ENCODE measurements at regions of chr10 and their contacts with region 1.

Region 1: DNA sequence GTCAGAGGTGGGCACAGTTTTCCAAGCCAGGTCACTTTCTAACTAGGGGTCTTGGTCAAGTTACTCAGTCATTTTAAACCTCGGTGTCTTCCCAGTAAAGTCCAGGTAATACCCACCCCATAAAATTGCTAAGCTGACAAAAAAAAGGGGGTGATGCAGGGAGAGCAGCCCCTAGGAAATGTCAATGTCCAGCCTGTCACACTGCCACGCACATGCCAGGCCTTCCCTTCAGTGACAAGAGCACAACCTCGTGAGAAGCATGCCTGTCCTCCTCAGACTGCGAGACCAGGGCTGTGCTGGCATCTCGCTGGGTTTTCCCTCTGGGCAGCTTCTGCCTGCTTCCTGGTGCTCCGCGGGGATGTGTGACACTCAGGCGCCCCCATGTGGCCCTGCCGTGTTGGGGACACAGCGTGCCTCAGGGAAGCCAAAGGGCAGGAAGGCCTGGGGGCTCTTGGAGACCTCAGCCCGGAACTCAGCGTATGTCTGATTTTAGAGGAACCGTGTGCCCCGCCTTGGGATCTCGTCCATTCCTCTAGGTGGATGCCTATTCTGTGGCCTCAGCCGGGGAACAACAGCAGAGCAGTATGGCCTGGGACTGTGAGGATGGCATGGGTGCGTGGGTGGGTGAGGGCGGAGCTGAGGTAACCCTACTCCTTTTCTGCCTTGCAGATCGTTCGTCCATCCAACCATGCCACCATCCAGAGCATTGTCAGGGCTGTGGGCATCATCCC is 10.2 kb upstream of the GDF2 start:
- DNase-seq: peak; percentile 75 to 92 (median 81)
- ATAC-seq: peak; percentile 77
- H3K4me3 ChIP-seq: peak overlapping the region; percentile 0
- H3K4me3 Mint-ChIP-seq: peak overlapping the region; percentile 56
- H3K27ac ChIP-seq: peak overlapping the region in 1 of 2 donors; percentile 39
- H3K27ac Mint-ChIP-seq: peak overlapping the region; percentile 88
- H3K4me1 ChIP-seq: peaks cover 44% of the 10 kb centered on the region
- H3K4me1 Mint-ChIP-seq: peaks cover 33% of the 10 kb centered on the region
- H3K27me3 ChIP-seq: no peaks in the 10 kb centered on the region
- H3K27me3 Mint-ChIP-seq: no peaks in the 10 kb centered on the region
- CTCF ChIP-seq: peak; percentile 90

Region 2: GRCh38 chr10:47031901-47032465 is 280.1 kb before region 1 on chr10:
- CTCF ChIA-PET with region 1: no interaction called
- POLR2A ChIA-PET with region 1: no interaction called
- intact Hi-C with region 1: no loop called
- DNase-seq: peak in 1 of 14 experiments; percentile 26
- ATAC-seq: no peak
- H3K4me3 ChIP-seq: no peak overlapping the region
- H3K4me3 Mint-ChIP-seq: no peak overlapping the region
- H3K27ac ChIP-seq: no peak overlapping the region
- H3K27ac Mint-ChIP-seq: no peak overlapping the region
- H3K4me1 ChIP-seq: no peaks in the 10 kb centered on the region
- H3K4me1 Mint-ChIP-seq: no peaks in the 10 kb centered on the region
- H3K27me3 ChIP-seq: no peaks in the 10 kb centered on the region
- H3K27me3 Mint-ChIP-seq: no peaks in the 10 kb centered on the region
- CTCF ChIP-seq: no peak

Region 3: DNA sequence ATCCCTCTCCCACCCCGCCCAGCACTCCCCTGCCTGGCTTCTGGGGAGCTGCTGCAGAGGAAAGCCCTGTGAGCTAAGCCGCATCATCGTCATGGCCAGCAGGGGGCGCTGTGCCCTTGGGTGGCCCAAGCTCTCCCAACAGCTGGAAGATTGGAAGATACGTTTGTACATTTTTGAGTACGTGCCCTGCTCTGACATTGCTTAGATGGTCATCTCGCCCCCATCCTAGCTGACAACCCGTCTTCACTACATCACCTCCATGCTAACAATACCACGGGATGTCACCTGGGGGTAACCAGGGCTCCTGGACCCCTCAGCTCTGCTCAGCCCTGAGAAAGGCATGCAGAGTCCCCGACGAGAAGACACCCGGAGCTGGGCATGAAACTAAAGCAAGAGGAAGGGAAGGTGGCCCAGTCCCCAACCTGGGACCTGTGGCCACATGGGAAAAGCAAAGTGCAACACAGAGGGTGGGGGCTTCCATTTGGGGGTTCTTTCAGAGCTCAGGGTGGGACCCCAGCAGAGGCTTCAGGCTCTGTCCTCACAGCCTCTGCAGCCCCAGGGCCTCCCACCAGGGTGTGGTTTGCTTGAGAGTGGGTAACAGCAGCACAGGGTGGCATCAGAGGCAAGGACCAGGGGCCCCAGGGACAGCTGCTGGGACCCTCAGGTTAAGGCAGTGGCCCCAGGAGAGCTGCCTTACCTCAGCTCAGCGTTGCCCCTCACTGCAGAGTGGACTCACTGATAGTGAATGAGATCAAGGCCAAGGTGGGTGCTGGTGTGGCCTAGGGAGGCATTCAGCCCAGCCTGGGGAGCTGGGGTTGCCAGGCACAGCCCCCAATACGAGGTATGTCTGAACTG is 264.2 kb before region 1 on chr10:
- CTCF ChIA-PET with region 1: interaction called, 76 read pairs
- POLR2A ChIA-PET with region 1: interaction called, 42 read pairs
- intact Hi-C with region 1: loop called (anchors 1 kb)
- DNase-seq: peak; percentile 60 to 87 (median 74)
- ATAC-seq: peak; percentile 60
- H3K4me3 ChIP-seq: no peak overlapping the region
- H3K4me3 Mint-ChIP-seq: no peak overlapping the region
- H3K27ac ChIP-seq: no peak overlapping the region
- H3K27ac Mint-ChIP-seq: no peak overlapping the region
- H3K4me1 ChIP-seq: peaks cover 17% of the 10 kb centered on the region
- H3K4me1 Mint-ChIP-seq: peaks cover 23% of the 10 kb centered on the region
- H3K27me3 ChIP-seq: no peaks in the 10 kb centered on the region
- H3K27me3 Mint-ChIP-seq: no peaks in the 10 kb centered on the region
- CTCF ChIP-seq: peak; percentile 86

Region 4: DNA sequence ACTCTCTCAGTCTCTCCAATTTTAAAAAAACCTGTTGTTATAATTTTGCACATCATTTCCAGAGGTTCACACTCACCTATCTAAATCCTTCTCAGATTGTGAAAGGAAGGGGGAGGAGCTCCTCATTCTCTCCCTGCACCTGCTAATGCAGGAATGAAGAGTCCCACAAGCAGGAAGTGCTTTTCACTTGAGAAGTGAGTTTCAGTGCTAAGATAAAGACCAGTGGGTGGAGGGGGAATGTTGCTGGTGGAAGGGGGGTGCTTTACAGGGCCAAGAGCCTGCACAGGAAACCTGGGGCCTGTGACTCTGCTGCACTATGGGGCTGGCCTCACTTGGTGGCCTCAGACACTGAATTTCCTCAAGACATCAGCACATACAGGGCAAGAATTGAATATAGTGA is 224.4 kb before region 1 on chr10:
- CTCF ChIA-PET with region 1: no interaction called
- POLR2A ChIA-PET with region 1: no interaction called
- intact Hi-C with region 1: no loop called
- DNase-seq: peak in 1 of 14 experiments; percentile 25
- ATAC-seq: peak; percentile 32
- H3K4me3 ChIP-seq: no peak overlapping the region
- H3K4me3 Mint-ChIP-seq: no peak overlapping the region
- H3K27ac ChIP-seq: peak overlapping the region in 1 of 2 donors; percentile 14
- H3K27ac Mint-ChIP-seq: peak overlapping the region; percentile 62
- H3K4me1 ChIP-seq: peaks cover 12% of the 10 kb centered on the region
- H3K4me1 Mint-ChIP-seq: peaks cover 19% of the 10 kb centered on the region
- H3K27me3 ChIP-seq: no peaks in the 10 kb centered on the region
- H3K27me3 Mint-ChIP-seq: no peaks in the 10 kb centered on the region
- CTCF ChIP-seq: no peak

Region 5: DNA sequence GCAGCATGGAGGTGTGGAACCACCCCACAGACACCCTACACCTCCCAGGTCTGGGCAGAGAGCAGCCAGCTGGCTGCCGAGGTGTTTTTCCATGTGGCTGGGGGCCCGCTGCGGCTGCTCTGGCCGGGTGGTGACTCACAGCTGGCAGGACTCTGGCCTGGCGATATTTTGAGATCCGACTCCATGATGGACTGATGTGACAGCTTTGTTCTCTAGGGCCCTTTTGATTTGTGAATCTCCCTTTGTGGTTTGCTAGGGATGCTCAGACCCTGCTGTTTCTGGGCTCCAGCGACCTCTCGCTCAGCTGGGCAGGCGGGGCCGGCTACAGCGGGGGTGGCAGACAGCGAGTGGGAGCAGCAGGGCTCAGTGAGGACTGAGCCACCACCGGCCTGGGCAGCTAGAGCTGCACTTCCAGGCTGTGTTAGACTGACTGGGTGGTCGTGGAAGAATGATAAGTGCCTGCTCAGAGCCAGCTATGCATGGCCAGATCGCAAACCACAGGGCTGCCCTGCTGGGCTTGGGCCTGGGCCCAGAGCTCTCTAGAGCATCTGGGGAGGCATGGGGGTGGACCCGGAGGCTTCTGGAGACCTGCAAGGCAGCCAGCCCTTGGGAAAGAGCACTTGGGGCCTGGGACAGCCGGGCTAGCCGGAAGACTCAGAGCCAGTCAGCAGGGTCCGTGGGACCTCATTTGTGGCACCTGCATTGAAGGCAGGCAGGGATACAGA is 58.3 kb before region 1 on chr10:
- CTCF ChIA-PET with region 1: interaction called, 3 read pairs
- POLR2A ChIA-PET with region 1: interaction called, 4 read pairs
- intact Hi-C with region 1: loop called (anchors 1 to 5 kb)
- DNase-seq: peak in 1 of 14 experiments; percentile 22
- ATAC-seq: no peak
- H3K4me3 ChIP-seq: no peak overlapping the region
- H3K4me3 Mint-ChIP-seq: no peak overlapping the region
- H3K27ac ChIP-seq: no peak overlapping the region
- H3K27ac Mint-ChIP-seq: no peak overlapping the region
- H3K4me1 ChIP-seq: peaks cover 46% of the 10 kb centered on the region
- H3K4me1 Mint-ChIP-seq: peaks cover 54% of the 10 kb centered on the region
- H3K27me3 ChIP-seq: no peaks in the 10 kb centered on the region
- H3K27me3 Mint-ChIP-seq: no peaks in the 10 kb centered on the region
- CTCF ChIP-seq: no peak

Region 6: DNA sequence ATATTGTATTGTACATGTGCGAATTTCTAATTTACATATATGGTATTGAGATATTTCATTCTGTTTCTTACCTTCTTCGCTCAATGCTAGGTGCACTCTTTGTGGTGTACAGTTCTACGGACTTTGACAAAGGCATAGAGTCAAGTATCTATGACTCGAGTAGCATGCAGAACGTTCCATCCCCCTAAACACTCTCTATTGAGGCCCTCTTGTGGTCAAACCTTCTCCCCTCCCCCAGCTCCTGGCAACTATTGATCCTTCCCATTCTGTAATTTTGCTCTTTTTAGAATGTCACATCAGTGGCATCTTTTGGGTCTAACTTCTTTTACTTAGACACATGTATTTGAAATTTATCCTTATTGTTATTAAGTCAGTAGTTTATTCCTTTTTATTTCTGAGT is 42.8 kb before region 1 on chr10:
- CTCF ChIA-PET with region 1: interaction called, 3 read pairs
- POLR2A ChIA-PET with region 1: no interaction called
- intact Hi-C with region 1: loop called in 1 of 2 experiments (anchors 5 kb)
- DNase-seq: peak in 2 of 14 experiments; percentile 20 to 32
- ATAC-seq: no peak
- H3K4me3 ChIP-seq: no peak overlapping the region
- H3K4me3 Mint-ChIP-seq: no peak overlapping the region
- H3K27ac ChIP-seq: no peak overlapping the region
- H3K27ac Mint-ChIP-seq: no peak overlapping the region
- H3K4me1 ChIP-seq: peaks cover 15% of the 10 kb centered on the region
- H3K4me1 Mint-ChIP-seq: peaks cover 36% of the 10 kb centered on the region
- H3K27me3 ChIP-seq: no peaks in the 10 kb centered on the region
- H3K27me3 Mint-ChIP-seq: no peaks in the 10 kb centered on the region
- CTCF ChIP-seq: peak; percentile 19